AG04449 (cell line): ENCODE measurements at regions of chr9 and their contacts with region 1.

Region 1: GRCh38 chr9:135971892-135972291 is 10.7 kb upstream of the UBAC1 start:
- DNase-seq: no peak
- H3K4me3 ChIP-seq: no peak overlapping the region
- CTCF ChIP-seq: no peak

Region 2: GRCh38 chr9:135770203-135770535 is 201.7 kb before region 1 on chr9:
- CTCF ChIA-PET with region 1: no interaction called
- POLR2A ChIA-PET with region 1: no interaction called
- DNase-seq: no peak
- H3K4me3 ChIP-seq: no peak overlapping the region
- CTCF ChIP-seq: no peak

Region 3: DNA sequence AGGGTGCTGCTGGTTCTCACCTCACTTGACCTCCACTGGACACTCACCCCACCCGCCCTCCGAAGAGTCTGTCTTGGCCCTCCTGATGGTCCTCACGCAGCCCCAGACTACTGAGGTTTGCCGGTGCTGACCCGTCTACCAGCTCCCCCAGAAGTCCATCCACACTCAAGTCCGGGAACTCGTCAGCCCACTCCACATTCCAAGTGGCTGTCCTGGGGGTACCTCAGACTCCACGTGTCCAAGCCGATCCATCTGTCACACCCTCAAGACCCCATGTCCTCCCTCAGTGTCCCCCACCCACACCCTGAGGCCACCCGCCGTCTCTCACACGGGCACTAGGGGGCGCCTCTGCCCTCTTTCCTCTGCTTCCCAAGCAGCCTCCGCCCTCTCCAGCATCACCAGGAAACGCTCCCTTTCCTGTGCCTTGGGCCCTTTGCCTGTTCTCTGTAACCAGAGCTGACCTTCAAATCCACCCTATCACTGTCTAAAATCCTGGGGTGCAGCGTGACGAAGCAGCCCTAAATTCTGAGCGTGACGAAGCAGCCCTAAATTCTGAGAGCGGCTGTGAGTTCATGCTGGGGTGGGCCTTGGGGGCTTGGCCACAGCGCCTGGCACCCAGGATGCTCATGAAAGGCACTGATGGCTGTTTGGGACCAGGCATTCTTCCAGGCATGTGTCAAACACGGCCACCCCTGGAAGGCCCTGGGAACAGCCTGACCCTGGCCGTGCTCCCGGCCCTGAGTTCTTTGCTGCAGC is 174.2 kb before region 1 on chr9:
- CTCF ChIA-PET with region 1: no interaction called
- POLR2A ChIA-PET with region 1: no interaction called
- DNase-seq: no peak
- H3K4me3 ChIP-seq: no peak overlapping the region
- CTCF ChIP-seq: peak; percentile 85

Region 4: GRCh38 chr9:135961277-135961705 is 10.6 kb before region 1 on chr9 and contains the start of gene UBAC1:
- CTCF ChIA-PET with region 1: interaction called, 11 read pairs
- POLR2A ChIA-PET with region 1: no interaction called
- DNase-seq: peak; percentile 33
- H3K4me3 ChIP-seq: peak within 1 kb of the TSS; percentile 81
- CTCF ChIP-seq: peak; percentile 63

Region 5: DNA sequence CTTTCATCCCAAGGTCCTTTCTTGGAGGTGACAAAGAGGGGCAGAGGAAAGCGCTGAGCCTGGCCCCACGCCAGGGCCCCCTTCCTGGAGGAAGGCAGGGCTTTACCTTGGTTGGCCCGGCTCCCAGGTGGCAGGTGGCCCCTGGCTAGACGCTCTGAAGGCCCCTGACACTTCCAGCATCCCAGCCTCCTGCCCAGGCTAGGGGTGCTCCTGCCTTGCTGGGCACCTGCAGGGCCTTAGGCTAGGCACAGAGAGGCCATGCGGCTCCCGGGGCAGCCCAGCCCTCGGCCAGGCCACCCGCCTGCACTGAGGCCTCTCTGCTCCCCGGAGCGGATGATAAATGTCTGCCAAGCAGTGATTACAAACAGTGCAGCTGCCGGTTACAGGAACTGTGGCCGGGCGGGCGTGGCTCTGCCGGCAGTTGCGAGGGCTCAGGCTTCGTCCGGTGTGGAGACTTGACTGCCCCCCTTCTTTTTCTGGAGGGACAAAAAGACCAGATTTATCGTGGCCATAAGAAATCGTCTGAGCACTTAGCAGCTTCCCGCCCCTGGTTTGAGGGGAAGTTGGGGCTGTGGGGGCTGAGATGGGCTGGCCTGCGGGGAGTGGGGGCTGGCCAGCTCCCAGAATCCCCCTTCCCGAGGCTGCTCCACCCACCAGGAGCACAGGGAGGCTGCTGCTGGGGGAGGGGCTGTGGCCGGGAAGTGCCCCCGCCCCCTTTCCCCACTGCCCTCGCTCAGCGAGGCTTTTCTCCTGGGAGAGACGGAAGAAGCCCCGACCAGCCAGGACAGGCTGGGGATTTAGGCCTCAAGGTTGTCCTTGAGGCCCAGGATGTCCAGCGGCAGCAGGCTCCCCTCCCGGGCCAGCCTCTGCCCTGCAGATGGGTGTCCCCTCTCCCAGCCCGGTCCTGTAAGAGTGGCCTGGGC is 20.9 kb after region 1 on chr9:
- CTCF ChIA-PET with region 1: interaction called, 25 read pairs
- POLR2A ChIA-PET with region 1: no interaction called
- DNase-seq: no peak
- H3K4me3 ChIP-seq: no peak overlapping the region; the same call in none of the 2 replicates
- CTCF ChIP-seq: no peak

Region 6: GRCh38 chr9:136109351-136110081 is 137.6 kb after region 1 on chr9:
- CTCF ChIA-PET with region 1: interaction called, 23 read pairs
- POLR2A ChIA-PET with region 1: no interaction called
- DNase-seq: peak; percentile 41
- H3K4me3 ChIP-seq: peak overlapping the region; percentile 34
- CTCF ChIP-seq: peak; percentile 9

Region 7: GRCh38 chr9:136160381-136160841 is 188.5 kb after region 1 on chr9:
- CTCF ChIA-PET with region 1: no interaction called
- POLR2A ChIA-PET with region 1: no interaction called
- DNase-seq: no peak
- H3K4me3 ChIP-seq: no peak overlapping the region
- CTCF ChIP-seq: no peak